Sciatic nerve (tissue), 2 donors: ENCODE measurements at regions of chr1 and their contacts with region 1.

Region 1: DNA sequence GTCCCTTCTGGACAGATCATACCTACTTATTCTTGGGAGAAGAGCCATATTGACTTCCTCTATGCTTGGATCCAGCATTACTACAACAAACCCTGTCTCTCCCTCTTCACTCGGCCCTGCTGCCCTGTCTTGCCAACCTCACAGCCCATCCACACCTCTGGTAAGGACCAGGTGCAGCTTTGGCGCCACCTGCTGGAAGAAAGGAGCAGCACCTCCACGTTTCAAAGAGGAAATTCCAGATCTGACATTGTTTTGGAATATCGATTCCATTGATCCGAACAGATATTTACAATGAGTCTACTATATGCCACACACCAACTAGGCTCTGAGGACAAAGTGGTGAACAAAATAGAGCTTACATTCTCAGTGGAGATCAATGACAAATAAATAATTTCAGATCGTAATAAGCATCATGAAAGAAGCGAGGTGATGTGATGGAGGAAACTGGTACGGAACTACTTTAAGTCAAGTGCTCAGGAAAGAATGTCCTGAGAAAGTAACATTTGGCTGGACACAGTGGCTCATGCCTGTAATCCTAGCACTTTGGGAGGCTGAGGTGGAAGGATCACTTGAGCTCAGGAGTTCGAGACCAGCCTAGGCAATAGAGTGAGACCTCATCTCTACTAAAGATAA is 18.7 kb downstream of the MFSD2A start:
- DNase-seq: peak; percentile 87
- ATAC-seq: peak; percentile 86

Region 2: GRCh38 chr1:39926343-39926793 is 47.3 kb before region 1 on chr1:
- intact Hi-C with region 1: loop called (anchors 5 kb)
- DNase-seq: no peak
- ATAC-seq: peak; percentile 33